ENCODE measurements at regions of chr15 and their contacts with region 1.

Region 1: GRCh38 chr15:83365370-83365938 is 81.0 kb upstream of the BNC1 start:
- DNase-seq: peak in 1 of 2 donors; percentile 9
- ATAC-seq: peak in 3 of 8 donors; percentile 43 to 78 (median 52)
- H3K4me3 ChIP-seq: peak overlapping the region; percentile 8 to 43 (median 42)
- H3K27ac ChIP-seq: no peak overlapping the region
- H3K4me1 ChIP-seq: peaks cover 0 to 13% (median 11%) of the 10 kb centered on the region in 9 donors
- H3K27me3 ChIP-seq: peaks cover 0 to 71% (median 51%) of the 10 kb centered on the region in 7 donors
- CTCF ChIP-seq: no peak

Region 2: GRCh38 chr15:83310521-83311472 is 54.7 kb before region 1 on chr15:
- intact Hi-C with region 1: loop called in 1 of 10 experiments (anchors 10 kb)
- DNase-seq: no peak
- ATAC-seq: peak in 2 of 8 donors; percentile 20 to 49
- H3K4me3 ChIP-seq: no peak overlapping the region
- H3K27ac ChIP-seq: no peak overlapping the region
- H3K4me1 ChIP-seq: peaks cover 0 to 16% (median 0%) of the 10 kb centered on the region in 9 donors
- H3K27me3 ChIP-seq: peaks cover 0 to 4% (median 0%) of the 10 kb centered on the region in 7 donors
- CTCF ChIP-seq: no peak

Region 3: DNA sequence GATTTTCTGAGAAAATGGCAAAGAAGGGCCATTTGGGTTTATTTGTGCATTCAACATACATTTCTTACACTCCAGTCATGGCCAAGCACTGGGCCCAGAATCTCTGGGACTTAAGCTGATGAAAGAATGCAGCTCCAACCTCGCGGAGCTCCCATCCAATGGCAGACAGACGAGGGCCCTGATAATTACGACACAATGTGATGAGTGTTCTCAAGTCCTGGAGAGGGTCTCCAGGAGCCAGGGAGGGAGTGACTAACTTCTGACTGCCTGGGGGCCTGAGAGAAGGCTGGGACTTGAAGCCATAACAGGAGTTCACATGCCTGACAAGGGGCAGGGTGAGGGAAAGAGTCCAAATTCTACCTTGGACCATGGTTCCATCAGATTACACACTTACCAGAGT is 38.4 kb before region 1 on chr15:
- intact Hi-C with region 1: no loop called
- DNase-seq: no peak
- ATAC-seq: no peak
- H3K4me3 ChIP-seq: no peak overlapping the region
- H3K27ac ChIP-seq: no peak overlapping the region
- H3K4me1 ChIP-seq: no peaks in the 10 kb centered on the region
- H3K27me3 ChIP-seq: peaks cover 0 to 21% (median 4%) of the 10 kb centered on the region in 7 donors
- CTCF ChIP-seq: no peak